ENCODE measurements at regions of chr6 and their contacts with region 1.

Region 1: GRCh38 chr6:56570413-56571359 is 72.0 kb downstream of the DST start:
- DNase-seq: no peak
- ATAC-seq: no peak
- H3K4me3 Mint-ChIP-seq: no peak overlapping the region
- H3K27ac Mint-ChIP-seq: no peak overlapping the region
- H3K4me1 Mint-ChIP-seq: no peaks in the 10 kb centered on the region
- H3K27me3 Mint-ChIP-seq: no peaks in the 10 kb centered on the region

Region 2: GRCh38 chr6:56581296-56581925 is 10.7 kb after region 1 on chr6:
- CTCF ChIA-PET with region 1: interaction called, 15 read pairs
- POLR2A ChIA-PET with region 1: no interaction called
- DNase-seq: no peak
- ATAC-seq: no peak
- H3K4me3 Mint-ChIP-seq: no peak overlapping the region
- H3K27ac Mint-ChIP-seq: no peak overlapping the region
- H3K4me1 Mint-ChIP-seq: no peaks in the 10 kb centered on the region
- H3K27me3 Mint-ChIP-seq: no peaks in the 10 kb centered on the region

Region 3: GRCh38 chr6:56595490-56596122 is 24.9 kb after region 1 on chr6:
- CTCF ChIA-PET with region 1: interaction called, 21 read pairs
- POLR2A ChIA-PET with region 1: no interaction called
- DNase-seq: peak; percentile 50
- ATAC-seq: peak; percentile 85
- H3K4me3 Mint-ChIP-seq: no peak overlapping the region
- H3K27ac Mint-ChIP-seq: no peak overlapping the region
- H3K4me1 Mint-ChIP-seq: peaks cover 12% of the 10 kb centered on the region
- H3K27me3 Mint-ChIP-seq: peaks cover 6% of the 10 kb centered on the region

Region 4: GRCh38 chr6:56888687-56889086 is 318.0 kb after region 1 on chr6:
- CTCF ChIA-PET with region 1: no interaction called
- POLR2A ChIA-PET with region 1: no interaction called
- DNase-seq: no peak
- ATAC-seq: no peak
- H3K4me3 Mint-ChIP-seq: no peak overlapping the region
- H3K27ac Mint-ChIP-seq: no peak overlapping the region
- H3K4me1 Mint-ChIP-seq: peaks cover 12% of the 10 kb centered on the region
- H3K27me3 Mint-ChIP-seq: peaks cover 7% of the 10 kb centered on the region

Measured in activated CD8-positive, alpha-beta T cell treated with anti-CD3 and anti-CD28 coated beads, Interleukin-2, amount 10 ng/mL, durations not matched to agents 7 days and 5 days (primary cell).